ENCODE measurements at regions of chr7 and their contacts with region 1.

Region 1: GRCh38 chr7:151671514-151671913 is 151.8 kb upstream of the RHEB start:
- DNase-seq: peak in 1 of 2 donors; percentile 37
- H3K4me3 ChIP-seq: no peak overlapping the region
- H3K27ac ChIP-seq: peak overlapping the region in 1 of 3 donors; percentile 19
- H3K4me1 ChIP-seq: peaks cover 6 to 11% of the 10 kb centered on the region in 2 donors
- H3K27me3 ChIP-seq: no peaks in the 10 kb centered on the region
- CTCF ChIP-seq: no peak
- POLR2A ChIP-seq: no peak

Region 2: GRCh38 chr7:151637781-151638261 is 33.7 kb before region 1 on chr7:
- intact Hi-C with region 1: loop called (anchors 5 kb)
- DNase-seq: peak in 1 of 2 donors; percentile 12
- H3K4me3 ChIP-seq: no peak overlapping the region
- H3K27ac ChIP-seq: no peak overlapping the region
- H3K4me1 ChIP-seq: peaks cover 0 to 2% of the 10 kb centered on the region in 2 donors
- H3K27me3 ChIP-seq: no peaks in the 10 kb centered on the region
- CTCF ChIP-seq: no peak
- POLR2A ChIP-seq: no peak